K562 (cell line): ENCODE measurements at regions of chr16 and their contacts with region 1.

Region 1: GRCh38 chr16:57300387-57301125 is 16.1 kb upstream of the PLLP start:
- DNase-seq: peak; percentile 96 to 98 (median 97)
- ATAC-seq: peak; percentile 92
- H3K4me3 ChIP-seq: peak overlapping the region; percentile 45
- H3K27ac ChIP-seq: peak overlapping the region; percentile 75
- H3K4me1 ChIP-seq: peaks cover 15 to 19% of the 10 kb centered on the region in 2 experiments; a peak in 4 of 5 replicates
- H3K27me3 ChIP-seq: peaks cover 0 to 5% of the 10 kb centered on the region in 2 experiments; a peak in 2 of 5 replicates
- CTCF ChIP-seq: peak; percentile 96 to 99 (median 99)
- EP300 ChIP-seq: peak; percentile 59
- POLR2A ChIP-seq: no peak
- RAD21 ChIP-seq: peak; percentile 99

Region 2: GRCh38 chr16:57185944-57186871 is 114.3 kb before region 1 on chr16 and contains the starts of genes PSME3IP1 and RSPRY1:
- CTCF ChIA-PET with region 1: no interaction called
- POLR2A ChIA-PET with region 1: no interaction called
- in situ Hi-C with region 1: no loop called
- intact Hi-C with region 1: loop called (anchors 2 kb)
- DNase-seq: peak; percentile 99 to 100 (median 100)
- ATAC-seq: peak; percentile 94
- H3K4me3 ChIP-seq: peak within 1 kb of the TSS; percentile 94
- H3K27ac ChIP-seq: peak within 1 kb of the TSS; percentile 93
- H3K4me1 ChIP-seq: peaks cover 6 to 9% of the 10 kb centered on the region in 2 experiments
- H3K27me3 ChIP-seq: no peaks in the 10 kb centered on the region
- CTCF ChIP-seq: no peak
- EP300 ChIP-seq: no peak
- POLR2A ChIP-seq: peak; percentile 88
- RAD21 ChIP-seq: no peak
- polyA plus RNA-seq, gene PSME3IP1: 63.8 to 142 TPM
- polyA plus RNA-seq, gene RSPRY1: 10.2 to 13.4 TPM

Region 3: DNA sequence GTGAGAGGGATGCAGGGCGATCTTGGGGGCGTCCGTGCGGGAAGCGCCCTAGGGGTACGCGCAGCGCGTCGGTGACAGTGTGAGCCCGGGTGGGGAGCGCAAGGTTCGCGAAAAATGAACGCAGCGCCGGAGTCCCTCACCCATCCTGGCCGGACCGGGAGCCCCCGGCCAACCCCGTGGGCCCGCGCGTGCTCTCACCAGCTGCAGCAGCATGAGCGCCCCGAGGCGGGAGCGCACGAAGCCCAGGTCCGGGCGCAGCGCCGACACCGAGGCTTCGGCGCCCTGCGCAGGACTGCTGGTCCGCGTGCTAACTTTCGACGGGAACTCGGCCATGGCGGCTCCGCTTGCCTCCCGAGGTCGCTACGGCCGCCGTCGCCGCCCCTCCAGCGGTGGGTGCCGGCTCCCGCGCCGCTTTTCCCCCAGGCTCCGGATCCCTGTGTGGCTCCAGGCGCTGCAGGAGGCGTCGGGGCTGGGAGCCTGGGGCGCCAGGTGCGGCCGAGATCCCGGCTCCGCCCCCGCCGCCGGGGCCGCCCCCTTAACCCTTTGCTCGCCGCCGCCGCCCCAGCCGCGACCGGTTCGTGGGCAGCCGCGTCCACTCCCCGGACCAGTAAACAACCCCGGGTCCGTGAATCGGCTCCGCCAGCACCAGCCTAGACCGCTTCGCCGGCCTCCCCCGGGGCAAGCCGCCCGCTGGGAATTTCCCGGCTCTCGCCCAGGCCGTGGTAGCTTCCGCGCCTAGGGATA is 16.2 kb before region 1 on chr16 and contains the start of gene PLLP:
- CTCF ChIA-PET with region 1: no interaction called
- POLR2A ChIA-PET with region 1: no interaction called
- in situ Hi-C with region 1: no loop called
- intact Hi-C with region 1: no loop called
- DNase-seq: peak; percentile 63 to 95 (median 90)
- ATAC-seq: peak; percentile 90
- H3K4me3 ChIP-seq: peak within 1 kb of the TSS; percentile 59
- H3K27ac ChIP-seq: no peak within 1 kb of the TSS
- H3K4me1 ChIP-seq: peaks cover 4 to 17% of the 10 kb centered on the region in 2 experiments; a peak in 3 of 5 replicates
- H3K27me3 ChIP-seq: peaks cover 4 to 19% of the 10 kb centered on the region in 2 experiments; a peak in 4 of 5 replicates
- CTCF ChIP-seq: 0 out of 6 replicates have a peak, but pooled peaks of 1 of the 3 experiments have one; percentile 4
- EP300 ChIP-seq: no peak
- POLR2A ChIP-seq: no peak
- RAD21 ChIP-seq: no peak
- polyA plus RNA-seq, gene PLLP: 0.10 to 0.15 TPM

Region 4: DNA sequence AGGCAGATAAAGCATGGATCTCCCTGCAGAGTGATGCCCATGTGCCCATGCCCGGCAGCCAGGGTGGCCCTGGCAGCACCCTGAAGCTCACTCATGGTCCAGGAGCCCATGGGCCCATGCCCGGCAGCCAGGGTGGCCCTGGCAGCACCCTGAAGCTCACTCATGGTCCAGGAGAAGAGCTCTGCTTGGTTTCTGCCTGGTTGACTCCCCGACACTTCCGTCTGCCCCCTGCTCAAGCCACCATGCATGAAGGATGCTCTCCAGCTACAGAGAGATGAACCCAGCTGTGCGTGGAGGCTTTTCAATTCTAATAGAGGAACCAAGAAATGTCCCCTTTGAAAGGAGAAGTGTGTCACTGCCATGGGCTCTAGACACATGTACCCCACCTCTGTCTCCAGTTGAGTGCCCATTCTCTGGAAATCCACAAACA is 112.8 kb after region 1 on chr16:
- CTCF ChIA-PET with region 1: interaction called, 109 read pairs
- POLR2A ChIA-PET with region 1: interaction called, 3 read pairs
- in situ Hi-C with region 1: loop called (anchors 5 kb)
- intact Hi-C with region 1: loop called (anchors 1 kb)
- DNase-seq: no peak
- ATAC-seq: no peak
- H3K4me3 ChIP-seq: no peak overlapping the region
- H3K27ac ChIP-seq: no peak overlapping the region
- H3K4me1 ChIP-seq: peaks cover 0 to 25% of the 10 kb centered on the region in 2 experiments; a peak in 4 of 5 replicates
- H3K27me3 ChIP-seq: peaks cover 11 to 50% of the 10 kb centered on the region in 2 experiments; a peak in 4 of 5 replicates
- CTCF ChIP-seq: no peak
- EP300 ChIP-seq: no peak
- POLR2A ChIP-seq: no peak
- RAD21 ChIP-seq: no peak

Region 5: GRCh38 chr16:57519796-57520360 is 219.3 kb after region 1 on chr16:
- CTCF ChIA-PET with region 1: interaction called, 27 read pairs
- POLR2A ChIA-PET with region 1: no interaction called
- in situ Hi-C with region 1: loop called (anchors 5 kb)
- intact Hi-C with region 1: loop called (anchors 1 kb)
- DNase-seq: peak; percentile 82 to 85 (median 83)
- ATAC-seq: peak; percentile 98
- H3K4me3 ChIP-seq: no peak overlapping the region
- H3K27ac ChIP-seq: no peak overlapping the region
- H3K4me1 ChIP-seq: peaks cover 0 to 14% of the 10 kb centered on the region in 2 experiments; a peak in 1 of 5 replicates
- H3K27me3 ChIP-seq: no peaks in the 10 kb centered on the region
- CTCF ChIP-seq: peak; percentile 96 to 98 (median 96)
- EP300 ChIP-seq: no peak
- POLR2A ChIP-seq: no peak
- RAD21 ChIP-seq: peak; percentile 94 to 98